Naive thymus-derived CD4-positive, alpha-beta T cell (primary cell): ENCODE measurements at regions of chr1 and their contacts with region 1.

Region 1: DNA sequence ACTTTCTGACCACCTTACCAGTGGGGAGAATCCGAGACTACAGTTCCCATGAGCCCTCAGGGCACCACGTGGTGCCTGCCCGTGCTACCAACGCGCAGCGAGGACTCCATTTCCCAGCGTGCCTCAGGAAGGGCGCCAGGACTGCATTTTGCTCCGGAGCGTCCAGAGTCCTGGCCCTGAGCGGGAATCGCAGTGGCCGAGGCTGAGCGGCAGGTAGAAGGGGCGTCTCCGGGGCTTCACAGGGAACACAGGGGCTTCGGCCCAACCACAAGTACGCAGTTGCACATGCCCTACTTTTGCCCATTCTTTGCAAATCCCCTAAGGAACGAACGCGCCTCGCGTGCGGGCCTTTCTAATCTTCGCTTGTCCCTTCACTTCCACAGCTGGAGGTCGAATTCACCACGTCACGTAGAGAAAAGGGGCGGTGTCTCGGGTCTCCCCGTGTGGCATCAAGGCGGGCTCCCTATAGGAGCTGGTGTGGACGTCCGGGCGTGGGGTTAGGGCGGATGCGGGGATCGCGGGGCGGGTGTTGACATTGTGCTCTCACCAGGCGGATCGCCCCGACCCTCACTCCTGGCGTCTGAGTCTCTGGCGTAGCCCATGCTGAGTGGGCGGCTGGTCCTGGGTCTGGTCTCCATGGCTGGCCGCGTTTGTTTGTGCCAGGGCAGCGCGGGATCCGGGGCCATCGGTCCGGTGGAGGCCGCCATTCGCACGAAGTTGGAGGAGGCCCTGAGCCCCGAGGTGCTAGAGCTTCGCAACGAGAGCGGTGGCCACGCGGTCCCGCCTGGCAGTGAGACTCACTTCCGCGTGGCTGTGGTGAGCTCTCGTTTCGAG is at the start of gene BOLA1:
- DNase-seq: peak; percentile 59 to 83 (median 71)
- ATAC-seq: peak; percentile 99
- H3K4me3 ChIP-seq: peak within 1 kb of the TSS; percentile 91
- H3K4me3 Mint-ChIP-seq: peak within 1 kb of the TSS; percentile 85 to 97 (median 90)
- H3K27ac ChIP-seq: peak within 1 kb of the TSS; percentile 85
- H3K27ac Mint-ChIP-seq: peak within 1 kb of the TSS; percentile 86 to 96 (median 93)
- H3K4me1 ChIP-seq: peaks cover 0 to 6% of the 10 kb centered on the region in 2 donors
- H3K4me1 Mint-ChIP-seq: peaks cover 11 to 27% (median 20%) of the 10 kb centered on the region in 7 donors
- H3K27me3 ChIP-seq: no peaks in the 10 kb centered on the region
- H3K27me3 Mint-ChIP-seq: no peaks in the 10 kb centered on the region
- total RNA-seq, gene BOLA1: 7.8 to 28.9 (median 18.2) TPM

Region 2: GRCh38 chr1:149917571-149918144 is 18.0 kb after region 1 on chr1 and contains the start of gene SV2A:
- CTCF ChIA-PET with region 1: no interaction called
- POLR2A ChIA-PET with region 1: interaction called, 7 read pairs
- intact Hi-C with region 1: loop called (anchors 1 kb)
- DNase-seq: peak in 8 of 9 donors; percentile 5 to 57 (median 20)
- ATAC-seq: peak; percentile 80
- H3K4me3 ChIP-seq: peak within 1 kb of the TSS; percentile 81
- H3K4me3 Mint-ChIP-seq: peak within 1 kb of the TSS; percentile 68 to 97 (median 88)
- H3K27ac ChIP-seq: peak within 1 kb of the TSS; percentile 36
- H3K27ac Mint-ChIP-seq: peak within 1 kb of the TSS in 8 of 9 donors; percentile 26 to 91 (median 70)
- H3K4me1 ChIP-seq: peaks cover 7 to 33% of the 10 kb centered on the region in 2 donors
- H3K4me1 Mint-ChIP-seq: peaks cover 22 to 57% (median 47%) of the 10 kb centered on the region in 7 donors
- H3K27me3 ChIP-seq: no peaks in the 10 kb centered on the region
- H3K27me3 Mint-ChIP-seq: no peaks in the 10 kb centered on the region
- total RNA-seq, gene SV2A: 2.6 to 18.8 (median 3.1) TPM

Region 3: DNA sequence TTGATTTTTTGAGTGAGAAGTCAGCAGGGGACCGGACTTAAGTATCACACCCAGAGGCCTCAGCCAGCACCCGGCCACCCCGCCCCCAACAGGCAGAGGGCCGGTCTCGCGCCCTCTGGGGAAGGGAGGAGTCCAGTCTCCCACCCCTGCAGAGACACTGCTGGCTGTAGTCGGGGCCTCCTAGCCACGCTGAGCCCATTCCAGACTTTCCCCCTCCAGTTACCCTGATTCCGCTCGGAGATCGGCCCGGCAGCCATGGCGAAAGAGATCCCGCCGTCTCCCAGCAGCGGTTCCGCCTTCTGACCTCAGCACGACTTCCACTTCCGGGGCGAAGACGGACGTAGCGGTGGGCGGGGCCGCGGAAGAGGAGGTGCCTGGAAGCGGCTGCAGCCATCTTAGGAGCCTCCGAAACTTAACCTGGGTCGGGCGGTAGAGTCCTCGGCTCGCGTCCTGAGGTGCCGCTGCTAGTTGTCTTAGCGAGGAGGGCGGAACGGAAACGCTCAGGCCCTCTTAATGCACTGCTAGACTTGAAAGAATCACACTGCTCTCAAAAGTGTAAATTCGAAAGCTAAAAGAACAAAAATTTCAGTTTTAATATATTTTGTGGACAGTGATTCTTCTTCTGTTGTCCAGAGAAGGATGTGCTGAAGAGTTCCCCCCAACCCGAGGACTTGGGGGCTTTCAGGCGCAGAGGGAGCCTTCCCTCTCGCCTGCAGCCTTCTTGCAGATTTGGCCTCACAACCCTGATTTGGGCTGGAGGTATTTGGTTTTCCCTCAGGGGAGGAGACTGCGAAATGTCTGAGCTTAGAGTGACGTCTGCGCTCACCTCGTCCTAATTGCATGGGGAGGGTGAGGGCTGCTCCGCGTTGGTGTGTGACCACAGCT is 28.1 kb after region 1 on chr1 and contains the start of gene SF3B4:
- CTCF ChIA-PET with region 1: no interaction called
- POLR2A ChIA-PET with region 1: interaction called, 26 read pairs
- intact Hi-C with region 1: loop called (anchors 1 kb)
- DNase-seq: peak; percentile 89 to 96 (median 95)
- ATAC-seq: peak; percentile 98
- H3K4me3 ChIP-seq: peak within 1 kb of the TSS; percentile 82
- H3K4me3 Mint-ChIP-seq: peak within 1 kb of the TSS; percentile 91 to 99 (median 96)
- H3K27ac ChIP-seq: peak within 1 kb of the TSS; percentile 94
- H3K27ac Mint-ChIP-seq: peak within 1 kb of the TSS; percentile 96 to 99 (median 98)
- H3K4me1 ChIP-seq: peaks cover 19 to 30% of the 10 kb centered on the region in 2 donors
- H3K4me1 Mint-ChIP-seq: peaks cover 44 to 67% (median 49%) of the 10 kb centered on the region in 7 donors
- H3K27me3 ChIP-seq: no peaks in the 10 kb centered on the region
- H3K27me3 Mint-ChIP-seq: peaks cover 0 to 13% (median 5%) of the 10 kb centered on the region in 5 donors
- total RNA-seq, gene SF3B4: 39.0 to 103 (median 43.4) TPM

Region 4: DNA sequence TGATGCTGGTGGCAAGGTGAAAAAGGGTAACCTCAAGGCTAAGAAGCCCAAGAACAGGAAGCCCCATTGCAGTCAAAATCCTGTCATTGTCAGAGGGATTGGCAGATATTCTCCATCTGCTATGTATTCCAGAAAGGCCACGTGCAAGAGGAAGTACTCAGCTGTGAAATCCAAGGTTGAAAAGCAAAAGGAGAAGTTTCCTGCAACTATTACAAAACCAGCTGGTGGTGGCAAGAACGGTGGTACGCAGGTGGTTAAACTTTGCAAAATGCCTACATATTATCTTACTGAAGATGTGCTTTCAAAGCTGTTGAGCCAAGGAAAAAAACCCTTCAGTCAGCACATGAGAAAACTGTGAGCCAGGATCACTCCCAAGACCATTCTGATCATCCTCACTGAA is 154.2 kb after region 1 on chr1:
- CTCF ChIA-PET with region 1: no interaction called
- POLR2A ChIA-PET with region 1: no interaction called
- intact Hi-C with region 1: loop called in 1 of 2 experiments (anchors 2 kb)
- DNase-seq: no peak
- ATAC-seq: no peak
- H3K4me3 ChIP-seq: no peak overlapping the region
- H3K4me3 Mint-ChIP-seq: no peak overlapping the region
- H3K27ac ChIP-seq: no peak overlapping the region
- H3K27ac Mint-ChIP-seq: no peak overlapping the region
- H3K4me1 ChIP-seq: peaks cover 0 to 6% of the 10 kb centered on the region in 2 donors
- H3K4me1 Mint-ChIP-seq: peaks cover 0 to 5% (median 2%) of the 10 kb centered on the region in 7 donors
- H3K27me3 ChIP-seq: no peaks in the 10 kb centered on the region
- H3K27me3 Mint-ChIP-seq: peaks cover 0 to 34% (median 0%) of the 10 kb centered on the region in 5 donors

Region 5: GRCh38 chr1:150162862-150163706 is 263.4 kb after region 1 on chr1:
- CTCF ChIA-PET with region 1: no interaction called
- POLR2A ChIA-PET with region 1: no interaction called
- intact Hi-C with region 1: loop called in 1 of 2 experiments (anchors 10 kb)
- DNase-seq: no peak
- ATAC-seq: peak; percentile 76
- H3K4me3 ChIP-seq: no peak overlapping the region
- H3K4me3 Mint-ChIP-seq: peak overlapping the region; percentile 12 to 72 (median 55)
- H3K27ac ChIP-seq: no peak overlapping the region
- H3K27ac Mint-ChIP-seq: peak overlapping the region in 8 of 9 donors; percentile 14 to 85 (median 58)
- H3K4me1 ChIP-seq: peaks cover 0 to 31% of the 10 kb centered on the region in 2 donors
- H3K4me1 Mint-ChIP-seq: peaks cover 39 to 73% (median 51%) of the 10 kb centered on the region in 7 donors
- H3K27me3 ChIP-seq: no peaks in the 10 kb centered on the region
- H3K27me3 Mint-ChIP-seq: peaks cover 0 to 9% (median 0%) of the 10 kb centered on the region in 5 donors